PC-9 (cell line): ENCODE measurements at regions of chr5 and their contacts with region 1.

Region 1: DNA sequence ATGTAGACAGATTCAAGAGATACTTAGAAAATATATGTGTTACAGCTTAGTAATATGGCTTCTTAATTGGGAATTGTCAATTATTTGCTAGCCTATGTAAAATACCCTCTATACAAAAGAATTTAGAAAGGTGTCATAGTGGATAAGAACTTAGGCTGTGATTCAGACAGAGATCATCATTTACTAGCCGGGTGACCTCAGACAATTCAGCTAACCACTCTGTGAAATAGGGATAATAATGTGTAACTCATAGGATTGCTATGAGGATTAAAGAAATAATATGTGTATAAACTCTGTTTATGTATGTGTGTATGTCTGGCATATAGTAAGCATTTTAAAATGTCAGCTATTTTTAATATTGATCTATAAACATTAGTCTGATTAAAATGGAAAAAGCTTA is 5.9 kb upstream of the LARS1 start:
- DNase-seq: peak in 1 of 2 experiments; percentile 53
- H3K4me3 ChIP-seq: no peak overlapping the region
- H3K27ac ChIP-seq: no peak overlapping the region
- H3K4me1 ChIP-seq: peaks cover 20% of the 10 kb centered on the region
- H3K27me3 ChIP-seq: no peaks in the 10 kb centered on the region
- CTCF ChIP-seq: no peak

Region 2: GRCh38 chr5:146130440-146131045 is 57.8 kb before region 1 on chr5:
- CTCF ChIA-PET with region 1: no interaction called
- POLR2A ChIA-PET with region 1: no interaction called
- intact Hi-C with region 1: no loop called
- DNase-seq: no peak
- H3K4me3 ChIP-seq: no peak overlapping the region
- H3K27ac ChIP-seq: no peak overlapping the region
- H3K4me1 ChIP-seq: no peaks in the 10 kb centered on the region
- H3K27me3 ChIP-seq: no peaks in the 10 kb centered on the region
- CTCF ChIP-seq: peak; percentile 85

Region 3: DNA sequence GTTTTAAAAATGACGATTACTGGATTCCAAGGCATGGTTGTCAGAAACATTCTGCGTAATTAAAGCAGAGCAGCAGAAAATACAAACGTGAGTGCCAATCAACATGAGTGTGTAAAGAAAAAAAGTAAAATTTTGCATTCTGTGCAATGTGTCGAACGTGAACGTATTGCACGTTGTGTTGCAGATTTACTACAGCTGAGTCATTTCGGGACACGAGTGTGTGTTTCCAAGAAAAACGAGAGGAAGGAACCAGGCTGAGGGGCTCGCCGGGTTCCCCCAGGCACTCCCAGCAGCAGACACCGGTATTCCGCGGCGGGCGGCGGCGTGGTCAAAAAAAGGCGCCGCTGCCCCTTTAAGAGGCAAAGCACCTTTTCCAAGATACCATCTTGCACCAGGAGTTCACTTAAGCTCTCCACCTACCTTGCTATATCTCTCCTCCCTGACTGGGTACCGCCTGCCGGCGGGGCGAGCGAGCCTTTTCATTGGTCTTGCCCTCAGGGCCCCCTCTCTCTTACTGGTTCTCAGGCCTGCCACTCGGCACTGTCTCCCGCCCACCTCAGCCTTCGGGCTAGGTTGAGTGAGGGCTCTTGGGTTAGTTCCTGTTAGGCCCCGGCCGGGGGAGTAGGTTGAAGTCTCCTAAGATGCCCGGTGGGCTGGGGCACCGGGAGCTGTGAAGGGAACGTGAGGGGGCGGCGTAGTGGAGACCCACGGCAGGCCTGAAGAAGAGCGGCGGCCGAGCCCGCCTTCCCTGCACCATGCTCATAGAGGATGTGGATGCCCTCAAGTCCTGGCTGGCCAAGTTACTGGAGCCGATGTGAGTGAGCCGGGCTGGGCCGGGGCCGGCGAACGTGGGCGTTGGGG is 14.9 kb after region 1 on chr5 and contains the start of gene RBM27:
- CTCF ChIA-PET with region 1: interaction called, 3 read pairs
- POLR2A ChIA-PET with region 1: no interaction called
- intact Hi-C with region 1: loop called (anchors 1 kb)
- DNase-seq: peak; percentile 96 to 100
- H3K4me3 ChIP-seq: peak within 1 kb of the TSS; percentile 96
- H3K27ac ChIP-seq: peak within 1 kb of the TSS; percentile 75
- H3K4me1 ChIP-seq: peaks cover 33% of the 10 kb centered on the region
- H3K27me3 ChIP-seq: no peaks in the 10 kb centered on the region
- CTCF ChIP-seq: no peak
- total RNA-seq, gene RBM27: 12.0 and 25.1 TPM in 2 replicates